Head of caudate nucleus (tissue), 42 donors: ENCODE measurements at regions of chr11 and their contacts with region 1.

Region 1: DNA sequence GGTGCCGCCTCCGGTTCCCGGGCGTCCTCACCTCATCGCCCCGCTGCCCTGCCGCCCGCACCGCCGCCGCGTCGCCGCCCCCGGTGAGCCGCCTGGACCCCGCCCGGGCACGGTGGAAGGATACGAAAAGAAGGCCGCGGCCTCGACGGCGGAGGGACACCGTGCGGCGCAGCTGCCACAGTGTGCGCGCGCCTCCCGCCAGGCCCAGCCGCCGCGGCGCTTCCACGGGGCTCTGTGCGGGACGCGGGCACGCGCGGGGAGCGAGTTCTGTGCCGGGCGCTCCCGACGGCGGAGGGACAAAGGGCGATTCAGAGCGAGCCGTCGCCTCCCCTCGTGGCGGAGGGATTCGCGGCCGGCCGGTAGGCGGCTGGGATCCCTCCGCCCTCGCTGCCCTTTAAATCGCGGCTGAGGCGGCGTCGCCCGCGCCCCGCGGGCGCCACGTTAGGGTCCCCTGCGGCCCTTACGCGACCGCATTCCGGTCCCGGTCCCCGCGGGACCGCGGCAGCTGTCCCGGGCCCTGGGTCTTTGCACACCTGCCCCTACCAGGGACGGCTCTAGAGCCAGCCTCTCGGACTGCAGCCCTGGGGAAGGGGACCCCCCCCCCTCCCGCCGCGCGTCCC is 569 bp upstream of the KMT5B start:
- DNase-seq: peak; percentile 52 to 95 (median 90)

Region 2: GRCh38 chr11:68121067-68121899 is 92.4 kb before region 1 on chr11 and contains the start of gene CHKA:
- intact Hi-C with region 1: loop called (anchors 2 kb)
- DNase-seq: peak; percentile 76 to 98 (median 95)

Region 3: DNA sequence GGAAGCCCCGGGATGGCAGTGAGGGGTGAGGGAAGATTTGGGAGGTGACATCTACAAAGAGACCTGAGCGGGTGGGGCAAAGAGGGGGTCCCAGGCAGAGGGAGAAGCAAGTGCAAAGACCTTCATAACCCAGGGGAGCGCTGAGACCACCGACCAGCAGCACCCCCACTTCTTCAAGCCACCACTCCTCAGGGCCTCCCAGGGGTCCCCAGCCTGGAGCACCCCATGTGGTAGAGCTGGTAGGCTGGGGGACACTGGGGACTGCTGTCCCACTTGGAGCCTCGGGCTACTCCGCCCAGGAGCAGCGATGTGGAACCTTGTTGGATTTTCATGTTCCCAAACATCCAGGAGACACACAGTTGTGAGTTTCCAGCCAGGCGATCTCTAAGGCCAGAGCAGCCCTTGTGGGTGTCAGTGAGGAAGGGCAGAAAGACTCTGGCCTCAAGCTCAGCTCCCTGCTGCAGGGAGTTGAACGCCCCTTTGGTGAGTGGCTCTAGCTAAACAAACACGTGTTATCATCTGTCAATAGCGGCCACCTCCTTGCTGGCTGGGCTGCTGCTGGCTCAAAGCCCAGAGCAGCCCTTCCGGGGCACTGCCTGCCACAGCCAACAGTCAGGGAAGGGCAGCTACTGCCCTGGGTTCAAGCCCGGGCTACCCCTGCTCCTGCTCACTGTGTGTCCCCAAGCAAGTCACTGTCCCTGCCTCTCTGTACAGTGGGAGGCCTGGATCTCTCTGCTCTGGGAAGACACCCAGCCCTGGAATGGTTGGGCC is 66.8 kb before region 1 on chr11:
- intact Hi-C with region 1: no loop called
- DNase-seq: peak in 18 of 42 donors; percentile 10 to 59 (median 32)

Region 4: DNA sequence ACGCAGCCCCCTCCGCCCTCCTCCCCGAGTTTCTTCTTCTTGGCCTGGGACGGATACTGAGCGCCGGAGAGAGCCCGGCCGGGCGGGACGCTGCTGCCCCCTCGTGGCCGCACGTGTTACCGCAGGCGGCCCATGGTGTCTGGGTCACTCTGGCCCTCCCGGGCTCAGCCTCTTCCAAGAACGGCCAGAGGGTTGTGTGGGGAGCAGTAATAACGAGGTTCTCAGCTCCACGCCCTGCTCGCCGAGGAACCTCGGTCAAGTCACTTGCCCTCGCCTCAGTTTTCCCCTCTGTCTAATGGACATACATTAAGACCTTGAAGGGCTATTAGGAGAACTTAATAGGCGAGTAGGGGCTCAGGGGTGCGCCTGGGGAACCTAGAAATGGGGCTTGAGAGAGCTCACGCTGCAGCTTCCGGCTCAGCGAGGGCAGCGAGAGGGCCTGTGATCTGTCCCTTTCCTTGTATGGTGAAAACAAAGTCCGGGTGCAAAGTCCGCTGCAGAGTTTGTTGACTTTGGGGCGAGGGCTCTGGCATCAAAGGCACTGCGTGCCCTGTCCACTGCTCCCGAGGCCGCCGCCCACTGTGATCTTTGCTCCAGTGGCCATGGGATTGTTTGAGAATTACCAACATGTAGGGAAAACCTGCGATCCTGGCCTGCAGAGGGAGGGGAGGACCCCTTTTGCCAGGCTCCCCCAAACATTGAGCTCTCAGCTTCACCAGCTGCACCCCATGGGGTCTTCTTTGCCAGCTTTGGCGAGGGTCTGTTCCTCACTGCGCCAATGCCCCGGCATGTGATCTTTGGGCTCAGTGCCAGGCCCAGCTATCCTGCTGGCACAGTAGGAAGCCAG is 84.4 kb after region 1 on chr11:
- intact Hi-C with region 1: loop called (anchors 10 kb)
- DNase-seq: peak; percentile 30 to 92 (median 80)

Region 5: GRCh38 chr11:68459886-68460740 is 246.4 kb after region 1 on chr11:
- intact Hi-C with region 1: loop called (anchors 5 kb)
- DNase-seq: peak; percentile 93 to 99 (median 98)